Endothelial cell of umbilical vein (primary cell): ENCODE measurements at regions of chr20 and their contacts with region 1.

Region 1: DNA sequence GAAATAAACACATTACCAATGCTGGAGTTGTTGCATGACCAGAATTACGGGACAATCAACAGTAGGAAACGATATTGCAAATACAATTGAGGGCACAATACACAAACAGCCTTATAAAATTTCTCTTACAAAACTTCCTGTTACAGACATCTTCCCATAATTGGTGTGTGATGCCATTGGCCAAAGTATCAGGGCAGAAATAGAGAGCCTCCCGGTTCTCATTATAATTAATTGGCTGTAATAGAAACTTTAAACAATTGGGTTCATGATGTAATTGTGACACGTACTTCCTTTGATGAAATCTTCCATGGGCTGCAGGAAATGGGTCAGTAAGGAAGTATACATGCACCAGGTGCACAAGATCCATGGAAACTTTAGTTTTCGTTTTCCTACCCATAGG is 40.3 kb upstream of the RALGAPA2 start:
- DNase-seq: peak; percentile 89
- H3K4me3 ChIP-seq: no peak overlapping the region
- H3K27ac ChIP-seq: peak overlapping the region; percentile 62
- H3K4me1 ChIP-seq: peaks cover 18% of the 10 kb centered on the region
- H3K27me3 ChIP-seq: no peaks in the 10 kb centered on the region
- CTCF ChIP-seq: no peak
- POLR2A ChIP-seq: no peak

Region 2: DNA sequence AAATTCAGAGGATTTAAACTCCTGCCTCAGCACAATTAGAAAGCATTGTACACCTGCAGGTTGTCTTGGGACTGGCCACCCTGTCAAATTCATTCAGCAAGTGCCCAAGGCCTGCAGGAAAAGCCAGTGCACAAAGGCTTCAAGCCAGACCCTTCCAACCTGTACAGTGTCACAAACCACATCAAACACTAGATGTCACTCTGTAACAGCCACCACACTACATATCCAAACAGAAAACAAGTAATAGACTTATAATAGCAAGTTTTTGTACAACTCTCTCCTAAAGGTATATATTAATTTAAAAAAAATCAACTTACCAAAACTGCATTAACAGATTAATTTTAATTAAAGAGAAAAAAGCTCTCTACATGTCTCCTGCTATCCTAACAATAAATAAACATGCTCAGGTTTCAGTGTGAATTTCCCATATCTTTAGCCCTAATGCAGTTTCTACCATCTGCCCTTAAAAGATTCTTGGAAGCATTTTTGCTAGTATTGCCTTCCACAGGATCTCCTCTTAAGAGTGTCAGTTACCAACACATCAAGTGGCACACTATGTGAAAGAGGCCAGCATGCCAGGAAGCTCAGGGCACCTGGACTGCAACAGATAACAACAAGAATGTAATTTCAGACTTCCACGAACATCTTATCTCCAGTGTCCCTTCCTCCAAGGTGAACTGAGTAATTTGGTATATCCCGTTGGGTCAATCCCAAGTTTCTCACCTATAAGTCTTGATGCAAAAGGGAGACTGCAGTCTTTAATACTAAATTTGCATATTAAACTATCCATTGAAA is 87.7 kb before region 1 on chr20:
- CTCF ChIA-PET with region 1: no interaction called
- POLR2A ChIA-PET with region 1: no interaction called
- dilution Hi-C with region 1: no loop called
- intact Hi-C with region 1: loop called (anchors 2 kb)
- DNase-seq: peak; percentile 77
- H3K4me3 ChIP-seq: no peak overlapping the region
- H3K27ac ChIP-seq: no peak overlapping the region
- H3K4me1 ChIP-seq: peaks cover 26% of the 10 kb centered on the region
- H3K27me3 ChIP-seq: no peaks in the 10 kb centered on the region
- CTCF ChIP-seq: peak; percentile 52 to 60
- POLR2A ChIP-seq: peak; percentile 27

Region 3: GRCh38 chr20:20802328-20802727 is 49.6 kb after region 1 on chr20:
- CTCF ChIA-PET with region 1: no interaction called
- POLR2A ChIA-PET with region 1: no interaction called
- dilution Hi-C with region 1: no loop called
- intact Hi-C with region 1: loop called (anchors 2 kb)
- DNase-seq: peak; percentile 86
- H3K4me3 ChIP-seq: no peak overlapping the region
- H3K27ac ChIP-seq: peak overlapping the region; percentile 27
- H3K4me1 ChIP-seq: peaks cover 16% of the 10 kb centered on the region
- H3K27me3 ChIP-seq: peaks cover 0 to 6% of the 10 kb centered on the region in 2 experiments
- CTCF ChIP-seq: no peak
- POLR2A ChIP-seq: no peak